ENCODE measurements at regions of chr1 and their contacts with region 1.

Region 1: GRCh38 chr1:186680245-186681061 is at the start of gene PTGS2:
- H3K4me3 Mint-ChIP-seq: peak within 1 kb of the TSS; percentile 88
- H3K27ac Mint-ChIP-seq: peak within 1 kb of the TSS; percentile 91
- H3K4me1 Mint-ChIP-seq: peaks cover 22% of the 10 kb centered on the region
- H3K27me3 Mint-ChIP-seq: no peaks in the 10 kb centered on the region

Region 2: DNA sequence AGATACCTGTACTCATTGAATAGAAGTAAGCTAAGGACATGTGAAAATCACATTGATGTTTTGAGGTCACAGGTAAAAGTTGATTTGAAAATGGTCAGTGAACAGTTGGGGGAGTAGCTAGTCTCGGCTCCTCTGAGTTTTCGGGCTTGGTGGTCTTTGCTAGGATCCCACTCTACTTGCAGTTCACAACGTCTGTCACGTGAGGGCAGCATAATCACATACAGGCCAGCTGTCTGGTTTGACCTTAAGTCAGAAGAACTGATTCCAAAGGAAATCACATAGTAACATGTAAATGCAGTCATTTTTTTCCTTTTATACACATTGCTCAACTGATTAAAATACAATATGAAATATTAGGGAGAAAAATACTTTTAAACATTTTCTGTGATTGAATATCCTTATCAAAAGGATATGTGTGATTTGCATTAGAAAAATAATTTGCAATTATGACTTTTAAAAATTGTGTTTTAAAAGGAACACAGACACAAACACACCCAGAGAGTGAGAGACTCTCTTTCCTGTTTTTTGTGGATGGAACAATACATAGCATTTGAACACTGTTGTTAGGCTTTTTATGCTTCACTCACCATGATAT is 197.7 kb before region 1 on chr1:
- intact Hi-C with region 1: loop called (anchors 2 kb)
- H3K4me3 Mint-ChIP-seq: no peak overlapping the region
- H3K27ac Mint-ChIP-seq: no peak overlapping the region
- H3K4me1 Mint-ChIP-seq: no peaks in the 10 kb centered on the region
- H3K27me3 Mint-ChIP-seq: no peaks in the 10 kb centered on the region

Region 3: GRCh38 chr1:186494832-186495271 is 185.6 kb before region 1 on chr1:
- intact Hi-C with region 1: no loop called
- H3K4me3 Mint-ChIP-seq: no peak overlapping the region
- H3K27ac Mint-ChIP-seq: no peak overlapping the region
- H3K4me1 Mint-ChIP-seq: no peaks in the 10 kb centered on the region
- H3K27me3 Mint-ChIP-seq: no peaks in the 10 kb centered on the region

Region 4: DNA sequence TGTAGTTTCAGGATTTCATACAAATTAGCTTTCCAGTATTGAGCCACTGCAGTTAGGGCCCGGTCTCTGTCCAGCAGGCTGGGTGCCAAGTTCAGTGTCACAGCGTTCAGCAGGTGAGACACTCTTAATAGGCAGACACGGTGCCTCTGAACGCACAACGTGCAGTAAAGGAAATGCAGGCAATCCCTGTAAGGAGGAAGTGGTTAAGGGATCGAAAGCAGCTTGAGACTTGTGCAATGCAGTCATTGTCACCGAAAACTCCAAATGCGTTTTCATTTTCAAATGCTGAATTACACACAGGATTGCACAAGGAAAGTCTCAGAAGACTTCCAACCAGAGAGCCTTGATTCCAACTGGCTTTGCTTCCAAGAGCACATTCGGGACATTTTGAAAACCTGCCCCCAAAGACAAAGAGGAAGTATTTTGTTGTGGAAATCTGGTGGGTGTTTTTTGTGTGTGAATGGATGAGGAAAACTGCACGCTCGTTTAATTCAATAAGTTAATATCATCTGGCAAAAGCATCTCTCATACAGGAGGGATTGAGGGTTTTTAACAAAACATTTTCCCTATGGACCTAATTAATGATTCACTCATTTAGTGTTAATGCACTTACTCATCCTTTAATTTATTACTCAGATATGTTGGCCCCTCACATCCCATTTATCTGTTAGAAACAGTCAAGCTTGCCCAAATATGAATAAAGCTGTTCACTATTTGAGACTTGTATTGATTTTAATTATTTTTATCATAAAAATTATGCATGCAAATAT is 61.9 kb before region 1 on chr1:
- intact Hi-C with region 1: loop called (anchors 1 kb)
- H3K4me3 Mint-ChIP-seq: peak overlapping the region; percentile 65
- H3K27ac Mint-ChIP-seq: peak overlapping the region; percentile 54
- H3K4me1 Mint-ChIP-seq: peaks cover 33% of the 10 kb centered on the region
- H3K27me3 Mint-ChIP-seq: no peaks in the 10 kb centered on the region

Region 5: DNA sequence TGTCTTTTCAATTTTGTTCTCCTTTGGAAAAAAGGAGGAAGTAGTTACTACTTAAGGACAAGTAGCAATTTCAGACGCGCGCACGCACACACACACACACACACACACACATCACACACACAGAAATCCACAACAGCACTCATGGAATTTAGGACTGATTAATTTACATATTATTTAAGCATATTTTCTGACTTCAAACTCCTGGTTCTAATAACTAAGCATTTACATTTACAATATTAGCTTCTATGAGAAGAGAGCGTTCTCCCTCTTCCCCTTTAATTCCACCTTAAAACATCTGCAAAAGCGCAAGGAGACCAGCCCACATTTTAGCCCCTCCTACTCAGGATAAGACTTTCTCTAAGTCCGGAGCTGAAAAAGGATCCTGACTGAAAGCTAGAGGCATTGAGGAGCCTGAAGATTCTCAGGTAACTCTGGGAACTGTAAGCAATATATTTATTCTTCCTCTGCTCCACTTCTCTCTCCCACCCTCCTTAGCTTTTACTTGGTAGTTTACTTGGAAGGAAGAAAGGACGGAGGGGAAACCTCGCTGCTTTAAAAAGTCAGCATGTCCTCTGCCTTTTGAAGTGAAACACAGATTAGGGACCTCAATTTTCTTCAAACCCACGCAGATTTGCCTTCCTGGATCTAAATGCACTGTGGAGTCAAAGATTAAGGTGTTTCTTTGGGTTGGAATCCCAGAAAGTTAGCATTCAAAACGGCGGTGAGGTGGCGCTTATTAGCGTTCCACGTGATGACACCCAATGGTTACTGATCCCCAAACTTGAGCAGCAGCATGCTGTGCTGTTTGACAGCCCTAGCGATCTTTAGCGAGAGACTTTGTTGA is 148.4 kb after region 1 on chr1 and contains the start of gene PLA2G4A:
- intact Hi-C with region 1: loop called (anchors 5 kb)
- H3K4me3 Mint-ChIP-seq: peak within 1 kb of the TSS; percentile 79
- H3K27ac Mint-ChIP-seq: peak within 1 kb of the TSS; percentile 88
- H3K4me1 Mint-ChIP-seq: peaks cover 14% of the 10 kb centered on the region
- H3K27me3 Mint-ChIP-seq: no peaks in the 10 kb centered on the region

Region 6: GRCh38 chr1:186925881-186926669 is 245.6 kb after region 1 on chr1:
- intact Hi-C with region 1: no loop called
- H3K4me3 Mint-ChIP-seq: no peak overlapping the region
- H3K27ac Mint-ChIP-seq: no peak overlapping the region
- H3K4me1 Mint-ChIP-seq: peaks cover 22% of the 10 kb centered on the region
- H3K27me3 Mint-ChIP-seq: no peaks in the 10 kb centered on the region

Measured in dendritic cell treated with granulocyte-macrophage colony-stimulating factor and Interleukin-4, amounts not matched to agents 40 ng/mL and 50 ng/mL, for 4 days (primary cell).